ENCODE measurements at regions of chr18 and their contacts with region 1.

Region 1: GRCh38 chr18:37537868-37538525 is 27.6 kb downstream of the CELF4 start:
- DNase-seq: peak; percentile 77
- ATAC-seq: peak; percentile 86 to 89

Region 2: DNA sequence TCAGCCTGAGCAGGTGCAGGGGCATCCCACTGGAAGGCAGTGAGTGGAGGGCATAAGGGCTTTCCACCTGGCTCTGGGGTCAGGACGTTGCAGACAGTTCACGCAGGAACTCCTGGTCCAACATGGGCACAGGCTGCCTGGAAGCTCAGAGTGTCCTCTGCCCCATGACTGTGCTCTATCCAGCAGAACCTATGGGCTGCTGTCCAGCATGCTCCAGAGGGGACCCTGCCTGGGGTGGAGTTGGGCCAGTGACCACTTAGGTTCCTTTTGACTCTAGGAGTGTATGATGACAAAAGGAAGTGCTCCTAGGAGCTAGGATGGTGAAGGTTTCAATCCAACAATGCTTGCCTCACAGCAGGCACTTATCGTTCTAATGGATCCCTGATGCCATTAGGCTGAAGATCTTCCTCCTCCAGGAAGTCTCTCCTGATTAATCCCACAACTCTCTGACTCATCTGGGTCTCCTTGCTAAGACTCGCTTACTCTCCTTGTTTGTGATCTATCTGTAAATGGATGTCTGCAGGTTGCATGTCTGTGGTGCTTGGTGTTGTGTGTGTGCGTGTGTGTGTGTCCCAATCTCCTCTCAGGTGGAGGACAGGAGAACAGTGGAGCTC is 196.4 kb before region 1 on chr18:
- intact Hi-C with region 1: loop called in 1 of 2 experiments (anchors 2 kb)
- DNase-seq: no peak
- ATAC-seq: no peak

Region 3: GRCh38 chr18:37445368-37445767 is 92.6 kb before region 1 on chr18:
- intact Hi-C with region 1: loop called in 1 of 2 experiments (anchors 10 kb)
- DNase-seq: no peak
- ATAC-seq: no peak

Measured in left cardiac atrium (tissue), 4 donors.